H1 (cell line): ENCODE measurements at regions of chr21 and their contacts with region 1.

Region 1: GRCh38 chr21:31686272-31686915 is 26.9 kb downstream of the SOD1 start:
- DNase-seq: no peak
- H3K4me3 ChIP-seq: no peak overlapping the region
- H3K27ac ChIP-seq: no peak overlapping the region
- H3K4me1 ChIP-seq: no peaks in the 10 kb centered on the region
- H3K27me3 ChIP-seq: no peaks in the 10 kb centered on the region
- CTCF ChIP-seq: no peak
- EP300 ChIP-seq: no peak
- POLR2A ChIP-seq: no peak
- RAD21 ChIP-seq: no peak

Region 2: DNA sequence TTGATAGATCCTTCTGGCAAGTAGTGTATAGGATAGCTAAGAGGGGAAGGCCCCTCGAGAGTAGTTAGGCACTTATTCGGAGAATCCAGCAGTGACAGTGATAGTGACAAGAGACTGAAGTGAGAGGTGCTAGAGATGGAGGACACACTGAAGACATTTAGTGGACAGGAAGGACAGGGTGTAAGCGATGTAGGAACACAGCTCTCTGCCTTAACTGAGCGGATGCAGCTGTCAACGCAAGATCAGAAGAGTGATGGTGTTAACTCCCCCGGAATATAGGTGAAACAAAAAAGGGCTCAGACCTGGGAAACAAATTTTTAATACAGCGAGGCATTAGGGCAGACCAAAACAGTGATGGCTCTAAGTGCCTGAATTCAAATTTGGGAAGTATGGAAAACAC is 11.1 kb before region 1 on chr21:
- CTCF ChIA-PET with region 1: interaction called, 3 read pairs
- POLR2A ChIA-PET with region 1: interaction called, 10 read pairs
- DNase-seq: no peak
- H3K4me3 ChIP-seq: no peak overlapping the region
- H3K27ac ChIP-seq: no peak overlapping the region
- H3K4me1 ChIP-seq: peaks cover 0 to 3% (median 1%) of the 10 kb centered on the region in 4 experiments; a peak in 3 of 7 replicates
- H3K27me3 ChIP-seq: no peaks in the 10 kb centered on the region
- CTCF ChIP-seq: no peak
- EP300 ChIP-seq: no peak
- POLR2A ChIP-seq: no peak
- RAD21 ChIP-seq: no peak